A673 (cell line): ENCODE measurements at regions of chr1 and their contacts with region 1.

Region 1: DNA sequence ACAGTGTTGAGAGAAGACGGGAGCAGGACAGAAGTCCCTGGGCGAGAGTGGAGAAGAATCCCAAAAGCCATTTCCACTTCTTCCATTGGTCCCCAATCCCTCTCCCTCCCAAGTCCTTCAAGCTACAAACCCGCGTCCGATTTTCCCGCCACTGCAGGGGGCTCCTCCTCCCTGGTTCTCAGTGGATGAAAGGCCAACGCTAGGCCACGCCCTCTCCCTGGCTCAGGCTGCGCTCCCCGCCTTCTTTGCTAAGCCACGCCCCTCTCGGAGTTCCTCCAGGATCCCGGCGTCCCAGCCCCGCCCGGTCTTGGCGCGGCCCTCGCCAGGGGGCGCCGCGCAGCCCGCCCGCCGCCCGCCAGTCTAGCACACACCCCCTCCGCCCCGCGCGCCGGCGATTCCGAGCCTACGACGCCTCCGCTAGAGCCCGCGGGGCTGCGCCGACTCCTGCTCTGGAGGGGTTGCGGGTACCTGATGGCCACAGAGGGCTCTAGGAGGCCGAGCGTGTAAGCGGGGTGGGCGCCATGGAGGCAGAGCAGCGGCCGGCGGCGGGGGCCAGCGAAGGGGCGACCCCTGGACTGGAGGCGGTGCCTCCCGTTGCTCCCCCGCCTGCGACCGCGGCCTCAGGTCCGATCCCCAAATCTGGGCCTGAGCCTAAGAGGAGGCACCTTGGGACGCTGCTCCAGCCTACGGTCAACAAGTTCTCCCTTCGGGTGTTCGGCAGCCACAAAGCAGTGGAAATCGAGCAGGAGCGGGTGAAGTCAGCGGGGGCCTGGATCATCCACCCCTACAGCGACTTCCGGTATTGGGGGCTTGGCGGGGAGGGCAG is at the start of gene HCN3:
- DNase-seq: peak; percentile 98
- H3K4me3 ChIP-seq: peak within 1 kb of the TSS; percentile 73
- H3K27ac ChIP-seq: peak within 1 kb of the TSS; percentile 48
- H3K4me1 ChIP-seq: peaks cover 22% of the 10 kb centered on the region
- H3K27me3 ChIP-seq: no peaks in the 10 kb centered on the region
- CTCF ChIP-seq: peak; percentile 60
- total RNA-seq, gene HCN3: 11.3 and 12.2 TPM in 2 replicates

Region 2: DNA sequence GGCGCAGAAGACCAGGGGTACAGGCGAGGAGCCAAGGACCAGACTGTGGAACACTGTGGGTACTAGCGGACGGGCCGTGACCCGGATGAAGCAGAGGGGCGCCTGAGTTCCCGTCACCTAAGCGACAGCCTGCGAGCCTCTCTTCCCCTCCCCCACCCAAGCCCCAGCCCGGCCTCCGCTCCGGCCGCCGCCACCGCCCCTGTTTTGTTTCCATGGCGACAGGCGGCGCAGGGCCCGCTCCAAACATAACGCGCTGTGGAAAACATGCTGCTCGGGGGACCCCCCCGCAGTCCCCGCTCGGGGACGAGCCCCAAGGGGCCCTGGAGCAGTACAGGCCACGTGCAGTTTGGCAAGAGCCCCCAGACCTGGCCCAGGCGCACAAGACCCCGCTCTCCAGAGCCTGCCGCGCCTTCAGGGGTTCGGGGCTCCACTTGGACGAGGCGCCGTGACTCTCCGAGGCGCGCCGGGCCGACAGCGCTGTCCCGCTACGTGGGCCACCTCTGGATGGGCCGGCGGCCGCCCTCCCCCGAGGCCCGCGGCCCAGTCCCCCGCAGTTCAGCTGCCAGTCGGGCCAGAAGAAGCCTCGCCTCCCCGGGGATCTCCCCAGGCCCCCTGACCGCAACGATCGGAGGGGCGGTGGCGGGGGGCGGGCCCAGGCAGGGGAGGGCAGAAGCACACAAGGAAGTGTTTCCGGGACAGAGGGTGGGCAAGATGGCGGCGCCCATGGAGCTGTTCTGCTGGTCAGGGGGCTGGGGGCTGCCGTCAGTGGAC is 68.6 kb before region 1 on chr1 and contains the start of gene MTX1:
- CTCF ChIA-PET with region 1: no interaction called
- POLR2A ChIA-PET with region 1: no interaction called
- intact Hi-C with region 1: no loop called
- DNase-seq: peak; percentile 87
- H3K4me3 ChIP-seq: peak within 1 kb of the TSS; percentile 95
- H3K27ac ChIP-seq: peak within 1 kb of the TSS; percentile 93
- H3K4me1 ChIP-seq: peaks cover 16% of the 10 kb centered on the region
- H3K27me3 ChIP-seq: no peaks in the 10 kb centered on the region
- CTCF ChIP-seq: no peak
- total RNA-seq, gene MTX1: 65.2 and 75.9 TPM in 2 replicates

Region 3: GRCh38 chr1:155227261-155228095 is 49.8 kb before region 1 on chr1:
- CTCF ChIA-PET with region 1: no interaction called
- POLR2A ChIA-PET with region 1: no interaction called
- intact Hi-C with region 1: loop called (anchors 2 kb)
- DNase-seq: peak; percentile 100
- H3K4me3 ChIP-seq: peak overlapping the region; percentile 59
- H3K27ac ChIP-seq: peak overlapping the region; percentile 91
- H3K4me1 ChIP-seq: peaks cover 20% of the 10 kb centered on the region
- H3K27me3 ChIP-seq: no peaks in the 10 kb centered on the region
- CTCF ChIP-seq: no peak

Region 4: GRCh38 chr1:155504207-155504606 is 226.9 kb after region 1 on chr1:
- CTCF ChIA-PET with region 1: interaction called, 23 read pairs
- POLR2A ChIA-PET with region 1: no interaction called
- intact Hi-C with region 1: no loop called
- DNase-seq: peak; percentile 57
- H3K4me3 ChIP-seq: no peak overlapping the region
- H3K27ac ChIP-seq: no peak overlapping the region
- H3K4me1 ChIP-seq: peaks cover 22% of the 10 kb centered on the region
- H3K27me3 ChIP-seq: no peaks in the 10 kb centered on the region
- CTCF ChIP-seq: peak; percentile 53; the same call in 1 of the 2 replicates

Region 5: DNA sequence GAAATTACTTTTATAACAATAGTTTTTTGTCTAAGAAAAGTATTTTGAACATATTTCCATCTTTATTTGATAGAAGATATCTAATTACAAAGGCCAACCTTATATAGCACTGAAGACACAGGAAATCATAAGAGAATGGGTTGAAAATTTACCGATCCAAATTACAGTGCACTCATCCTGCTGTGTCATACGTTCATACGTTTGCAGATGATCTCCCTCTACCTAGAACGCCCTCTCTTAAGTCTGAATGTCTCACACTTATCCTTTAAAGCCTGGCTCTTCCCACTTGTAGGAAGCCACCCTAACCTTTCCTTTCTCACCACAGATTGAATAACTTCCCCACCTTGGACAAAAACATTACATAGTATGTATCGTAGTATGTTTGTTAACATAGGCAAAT is 276.1 kb after region 1 on chr1:
- CTCF ChIA-PET with region 1: no interaction called
- POLR2A ChIA-PET with region 1: no interaction called
- intact Hi-C with region 1: no loop called
- DNase-seq: no peak
- H3K4me3 ChIP-seq: no peak overlapping the region
- H3K27ac ChIP-seq: no peak overlapping the region
- H3K4me1 ChIP-seq: no peaks in the 10 kb centered on the region
- H3K27me3 ChIP-seq: no peaks in the 10 kb centered on the region
- CTCF ChIP-seq: no peak